ENCODE measurements at regions of chr18 and their contacts with region 1.

Region 1: DNA sequence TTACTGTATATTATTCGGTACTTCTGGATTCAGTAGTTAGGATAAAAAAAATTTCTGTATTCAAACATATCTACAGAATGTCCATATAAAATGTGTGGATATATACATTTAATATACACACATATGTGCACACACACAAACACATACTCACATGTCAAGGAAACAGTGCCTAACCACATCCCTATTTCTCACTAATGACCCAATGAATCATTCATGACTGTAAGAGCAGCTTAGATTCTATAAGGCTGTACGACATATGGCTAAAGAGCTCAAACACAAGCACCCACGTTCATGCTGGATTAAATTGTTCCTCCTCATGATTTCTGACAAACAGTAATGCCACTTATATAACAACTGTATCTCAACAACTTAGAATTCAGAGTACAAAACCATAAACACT is 457.3 kb downstream of the ADCYAP1 start:
- ATAC-seq: no peak
- H3K4me3 ChIP-seq: no peak overlapping the region
- H3K27ac ChIP-seq: no peak overlapping the region
- H3K4me1 ChIP-seq: no peaks in the 10 kb centered on the region

Region 2: DNA sequence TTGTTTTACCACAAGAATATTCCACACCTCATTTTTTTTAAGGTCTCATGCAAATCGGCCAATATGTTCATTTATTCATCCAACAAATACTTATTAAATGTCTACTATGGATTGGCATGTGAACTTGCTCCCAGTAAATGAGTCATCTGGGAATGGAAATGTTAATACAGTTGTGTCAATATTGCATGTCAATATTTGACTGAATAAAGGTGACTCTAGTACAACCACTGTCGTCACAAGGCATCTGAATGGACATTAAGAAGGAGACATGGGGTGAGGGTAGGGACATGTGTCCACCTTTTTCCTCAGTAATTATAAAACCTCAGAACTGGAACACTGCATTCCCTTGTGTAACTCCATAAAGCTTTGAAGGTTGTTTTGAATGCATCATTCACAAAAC is 91.9 kb before region 1 on chr18:
- in situ Hi-C with region 1: loop called in 1 of 9 experiments (anchors 25 kb)
- ATAC-seq: peak in 2 of 8 experiments; percentile 33 to 55
- H3K4me3 ChIP-seq: no peak overlapping the region
- H3K27ac ChIP-seq: no peak overlapping the region
- H3K4me1 ChIP-seq: no peaks in the 10 kb centered on the region

Measured in motor neuron (in vitro differentiated cells).